Activated T-helper 2 cell treated with anti-CD3 and anti-CD28 coated beads, Interferon-gamma antibody, Interleukin-2, Interleukin-4, amounts not matched to agents 10 μg/mL and 5 μg/mL and 100 μg/mL, durations not matched to agents 14 hours and 24 hours and 36 hours (primary cell): ENCODE measurements at regions of chr11 and their contacts with region 1.

Region 1: DNA sequence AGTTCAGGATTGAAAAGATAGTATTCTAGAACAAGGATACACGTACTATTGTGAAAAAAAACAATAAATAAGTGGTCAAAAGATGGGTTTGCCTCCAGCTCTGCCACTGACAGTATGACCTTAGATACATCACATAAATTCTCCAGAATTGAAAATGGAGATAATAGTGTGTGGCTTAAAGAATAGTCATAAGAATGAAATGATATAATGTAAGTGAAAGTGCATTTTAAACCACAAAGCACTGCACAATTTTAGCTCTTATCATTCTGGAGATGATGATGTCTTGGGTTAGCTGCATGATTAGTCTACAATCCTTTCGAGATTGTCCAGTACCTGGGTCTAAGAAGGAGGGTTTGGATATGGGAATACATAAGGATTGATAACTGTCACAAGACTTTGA is 21.9 kb upstream of the CEP295 start:
- DNase-seq: no peak
- H3K4me3 Mint-ChIP-seq: no peak overlapping the region
- H3K27ac Mint-ChIP-seq: no peak overlapping the region
- H3K4me1 Mint-ChIP-seq: peaks cover 12% of the 10 kb centered on the region
- H3K27me3 Mint-ChIP-seq: peaks cover 1% of the 10 kb centered on the region

Region 2: DNA sequence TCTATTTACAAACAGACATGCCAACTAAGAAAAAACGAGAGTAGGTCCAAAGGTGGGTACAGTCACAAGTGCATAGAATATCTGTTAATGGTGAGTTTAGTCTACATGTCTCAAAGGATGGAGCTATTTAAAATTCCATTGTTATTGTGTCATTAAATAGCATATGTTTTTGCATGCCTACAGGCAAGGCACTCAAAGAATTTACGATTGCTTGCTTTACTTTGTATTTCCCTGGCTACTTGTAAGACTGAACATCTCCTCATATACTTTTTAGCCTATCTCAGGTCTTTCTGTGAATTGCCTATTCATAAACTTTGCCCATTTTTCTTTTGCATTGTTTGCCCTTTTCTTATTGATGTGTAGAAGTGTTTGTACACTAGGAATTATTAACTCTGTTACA is 269.3 kb before region 1 on chr11:
- intact Hi-C with region 1: no loop called
- DNase-seq: no peak
- H3K4me3 Mint-ChIP-seq: no peak overlapping the region
- H3K27ac Mint-ChIP-seq: no peak overlapping the region
- H3K4me1 Mint-ChIP-seq: no peaks in the 10 kb centered on the region
- H3K27me3 Mint-ChIP-seq: no peaks in the 10 kb centered on the region

Region 3: DNA sequence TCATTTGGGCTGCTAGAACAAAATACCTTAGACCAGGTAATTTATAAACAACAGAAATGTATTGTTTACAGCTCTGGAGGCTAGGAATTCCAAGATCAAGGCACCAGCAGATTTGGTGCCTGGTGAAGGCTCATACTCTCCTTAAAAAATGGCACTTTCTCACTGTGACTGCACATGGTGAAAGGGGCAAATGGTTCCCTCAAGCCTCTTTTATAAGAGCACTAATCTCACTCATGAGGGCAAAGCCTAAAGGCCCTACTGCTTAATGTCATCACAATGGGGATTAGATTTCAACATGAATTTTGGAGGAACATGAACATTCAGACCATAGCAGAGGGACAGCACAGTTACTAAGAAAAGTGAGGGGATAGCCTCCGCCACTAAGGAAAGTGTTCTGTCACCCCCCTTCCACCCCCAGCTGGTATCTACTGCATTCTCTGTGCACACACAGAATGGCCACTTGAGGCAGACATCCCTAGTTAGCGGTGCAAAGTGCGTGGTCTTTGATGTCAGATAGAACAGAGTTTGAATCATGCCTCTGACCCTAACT is 25.3 kb before region 1 on chr11:
- intact Hi-C with region 1: loop called (anchors 1 kb)
- DNase-seq: peak; percentile 18
- H3K4me3 Mint-ChIP-seq: no peak overlapping the region
- H3K27ac Mint-ChIP-seq: no peak overlapping the region
- H3K4me1 Mint-ChIP-seq: no peaks in the 10 kb centered on the region
- H3K27me3 Mint-ChIP-seq: peaks cover 2% of the 10 kb centered on the region

Region 4: DNA sequence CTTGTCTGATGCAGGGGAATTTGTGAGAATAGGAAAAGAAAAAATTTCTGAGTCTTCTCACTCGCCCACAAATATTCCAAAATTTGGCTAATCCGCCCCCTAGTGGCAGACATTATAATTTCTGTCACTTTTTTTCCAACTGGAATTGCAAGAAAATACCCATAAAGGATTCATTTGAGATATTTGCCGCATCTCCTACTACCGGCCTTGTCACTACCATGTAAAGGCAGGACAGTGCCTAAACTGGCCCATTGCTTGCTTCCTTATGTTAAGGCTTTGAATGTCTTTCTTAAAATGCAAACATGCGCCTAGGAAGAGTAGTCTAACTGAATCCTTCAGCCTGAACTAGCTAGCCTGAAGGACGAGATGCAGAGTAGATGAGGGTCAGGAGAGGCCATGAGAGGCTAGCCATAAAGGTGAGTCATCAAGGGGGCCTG is 12.6 kb after region 1 on chr11:
- intact Hi-C with region 1: loop called (anchors 2 kb)
- DNase-seq: no peak
- H3K4me3 Mint-ChIP-seq: no peak overlapping the region
- H3K27ac Mint-ChIP-seq: peak overlapping the region; percentile 7
- H3K4me1 Mint-ChIP-seq: peaks cover 35% of the 10 kb centered on the region
- H3K27me3 Mint-ChIP-seq: peaks cover 9% of the 10 kb centered on the region

Region 5: GRCh38 chr11:93773045-93773477 is 133.5 kb after region 1 on chr11:
- intact Hi-C with region 1: no loop called
- DNase-seq: no peak
- H3K4me3 Mint-ChIP-seq: no peak overlapping the region
- H3K27ac Mint-ChIP-seq: no peak overlapping the region
- H3K4me1 Mint-ChIP-seq: no peaks in the 10 kb centered on the region
- H3K27me3 Mint-ChIP-seq: no peaks in the 10 kb centered on the region

Region 6: DNA sequence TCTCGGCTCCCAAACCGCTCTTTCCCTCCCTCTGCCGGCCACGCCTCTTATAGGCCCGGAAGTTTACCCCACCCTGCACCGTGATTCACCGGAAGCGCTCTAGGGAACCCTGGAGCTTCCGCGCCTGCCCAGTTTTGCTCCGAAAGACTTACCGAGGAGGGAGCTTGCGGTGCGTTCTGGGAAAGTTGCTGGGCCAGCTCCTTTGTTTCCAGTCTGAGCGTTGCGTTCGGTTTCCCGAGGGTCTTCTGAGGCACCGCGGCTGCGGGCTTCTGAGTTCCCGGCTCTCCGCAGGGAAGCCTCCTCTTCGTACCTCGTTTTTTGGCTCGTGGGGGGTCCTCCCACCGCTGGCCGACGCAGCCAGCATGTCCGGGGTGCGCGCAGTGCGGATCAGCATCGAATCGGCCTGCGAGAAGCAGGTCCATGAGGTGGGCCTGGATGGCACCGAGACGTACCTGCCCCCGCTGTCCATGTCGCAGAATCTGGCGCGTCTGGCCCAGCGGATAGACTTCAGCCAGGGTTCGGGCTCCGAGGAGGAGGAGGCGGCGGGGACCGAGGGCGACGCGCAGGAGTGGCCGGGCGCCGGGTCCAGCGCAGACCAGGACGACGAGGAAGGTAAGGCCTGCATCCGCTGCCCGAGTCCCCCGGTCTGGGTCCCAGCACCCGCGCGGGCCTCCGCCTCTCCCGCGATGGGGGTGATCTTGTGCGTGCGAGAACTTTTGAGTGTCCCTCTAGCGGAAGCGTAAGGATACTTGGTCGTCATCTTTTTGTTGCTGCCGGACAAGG is 144.8 kb after region 1 on chr11 and contains the start of gene MED17:
- intact Hi-C with region 1: no loop called
- DNase-seq: peak; percentile 85
- H3K4me3 Mint-ChIP-seq: peak within 1 kb of the TSS; percentile 95
- H3K27ac Mint-ChIP-seq: peak within 1 kb of the TSS; percentile 89
- H3K4me1 Mint-ChIP-seq: peaks cover 49% of the 10 kb centered on the region
- H3K27me3 Mint-ChIP-seq: no peaks in the 10 kb centered on the region
- total RNA-seq, gene MED17: 48.5 and 50.8 TPM in 2 replicates